CD8-positive, alpha-beta T cell (primary cell): ENCODE measurements at regions of chr3 and their contacts with region 1.

Region 1: GRCh38 chr3:169764452-169765274 is at the start of gene TERC:
- DNase-seq: peak; percentile 84 to 98 (median 93)
- ATAC-seq: peak; percentile 84
- H3K4me3 ChIP-seq: peak within 1 kb of the TSS; percentile 79 to 81
- H3K4me3 Mint-ChIP-seq: peak within 1 kb of the TSS; percentile 96
- H3K27ac ChIP-seq: peak within 1 kb of the TSS; percentile 91 to 93
- H3K27ac Mint-ChIP-seq: peak within 1 kb of the TSS; percentile 98
- H3K4me1 ChIP-seq: peaks cover 14% of the 10 kb centered on the region
- H3K4me1 Mint-ChIP-seq: peaks cover 25% of the 10 kb centered on the region
- H3K27me3 ChIP-seq: no peaks in the 10 kb centered on the region
- H3K27me3 Mint-ChIP-seq: no peaks in the 10 kb centered on the region
- CTCF ChIP-seq: no peak
- total RNA-seq, gene TERC: 12.7 to 13.3 TPM

Region 2: GRCh38 chr3:169668957-169669681 is 95.5 kb before region 1 on chr3:
- CTCF ChIA-PET with region 1: no interaction called
- POLR2A ChIA-PET with region 1: no interaction called
- intact Hi-C with region 1: loop called in 1 of 2 experiments (anchors 10 kb)
- DNase-seq: peak in 2 of 9 experiments; percentile 30 to 40
- ATAC-seq: no peak
- H3K4me3 ChIP-seq: no peak overlapping the region
- H3K4me3 Mint-ChIP-seq: peak overlapping the region; percentile 42
- H3K27ac ChIP-seq: no peak overlapping the region
- H3K27ac Mint-ChIP-seq: no peak overlapping the region
- H3K4me1 ChIP-seq: peaks cover 19% of the 10 kb centered on the region
- H3K4me1 Mint-ChIP-seq: peaks cover 21% of the 10 kb centered on the region
- H3K27me3 ChIP-seq: peaks cover 30 to 39% of the 10 kb centered on the region in 2 experiments
- H3K27me3 Mint-ChIP-seq: peaks cover 69% of the 10 kb centered on the region
- CTCF ChIP-seq: no peak

Region 3: GRCh38 chr3:169863458-169863899 is 98.8 kb after region 1 on chr3:
- CTCF ChIA-PET with region 1: interaction called, 9 read pairs
- POLR2A ChIA-PET with region 1: no interaction called
- intact Hi-C with region 1: loop called (anchors 2 to 5 kb)
- DNase-seq: peak; percentile 21 to 82 (median 59)
- ATAC-seq: peak; percentile 69
- H3K4me3 ChIP-seq: no peak overlapping the region
- H3K4me3 Mint-ChIP-seq: no peak overlapping the region
- H3K27ac ChIP-seq: no peak overlapping the region
- H3K27ac Mint-ChIP-seq: no peak overlapping the region
- H3K4me1 ChIP-seq: peaks cover 15% of the 10 kb centered on the region
- H3K4me1 Mint-ChIP-seq: peaks cover 20% of the 10 kb centered on the region
- H3K27me3 ChIP-seq: peaks cover 0 to 4% of the 10 kb centered on the region in 2 experiments
- H3K27me3 Mint-ChIP-seq: peaks cover 5% of the 10 kb centered on the region
- CTCF ChIP-seq: peak; percentile 95

Region 4: GRCh38 chr3:170037463-170038433 is 273.1 kb after region 1 on chr3 and contains the start of gene GPR160:
- CTCF ChIA-PET with region 1: interaction called, 7 read pairs
- POLR2A ChIA-PET with region 1: no interaction called
- intact Hi-C with region 1: loop called (anchors 2 to 5 kb)
- DNase-seq: peak; percentile 61 to 89 (median 81)
- ATAC-seq: peak; percentile 73
- H3K4me3 ChIP-seq: peak within 1 kb of the TSS; percentile 73 to 82
- H3K4me3 Mint-ChIP-seq: peak within 1 kb of the TSS; percentile 88
- H3K27ac ChIP-seq: peak within 1 kb of the TSS in 1 of 2 experiments; percentile 45
- H3K27ac Mint-ChIP-seq: peak within 1 kb of the TSS; percentile 71
- H3K4me1 ChIP-seq: peaks cover 32% of the 10 kb centered on the region
- H3K4me1 Mint-ChIP-seq: peaks cover 22% of the 10 kb centered on the region
- H3K27me3 ChIP-seq: no peaks in the 10 kb centered on the region
- H3K27me3 Mint-ChIP-seq: no peaks in the 10 kb centered on the region
- CTCF ChIP-seq: peak; percentile 87
- total RNA-seq, gene GPR160: 2.9 to 3.7 TPM

Region 5: GRCh38 chr3:170869645-170870593 is 1105.3 kb after region 1 on chr3 and contains the start of gene RPL22L1:
- CTCF ChIA-PET with region 1: no interaction called
- POLR2A ChIA-PET with region 1: no interaction called
- intact Hi-C with region 1: loop called (anchors 2 to 5 kb)
- DNase-seq: peak; percentile 85 to 97 (median 93)
- ATAC-seq: peak; percentile 93
- H3K4me3 ChIP-seq: peak within 1 kb of the TSS; percentile 73 to 77
- H3K4me3 Mint-ChIP-seq: peak within 1 kb of the TSS; percentile 94
- H3K27ac ChIP-seq: peak within 1 kb of the TSS; percentile 84 to 94
- H3K27ac Mint-ChIP-seq: peak within 1 kb of the TSS; percentile 97
- H3K4me1 ChIP-seq: peaks cover 27% of the 10 kb centered on the region
- H3K4me1 Mint-ChIP-seq: peaks cover 28% of the 10 kb centered on the region
- H3K27me3 ChIP-seq: no peaks in the 10 kb centered on the region
- H3K27me3 Mint-ChIP-seq: no peaks in the 10 kb centered on the region
- CTCF ChIP-seq: no peak
- total RNA-seq, gene RPL22L1: 54.3 to 56.8 TPM